CD8-positive, alpha-beta T cell (primary cell): ENCODE measurements at regions of chr1 and their contacts with region 1.

Region 1: DNA sequence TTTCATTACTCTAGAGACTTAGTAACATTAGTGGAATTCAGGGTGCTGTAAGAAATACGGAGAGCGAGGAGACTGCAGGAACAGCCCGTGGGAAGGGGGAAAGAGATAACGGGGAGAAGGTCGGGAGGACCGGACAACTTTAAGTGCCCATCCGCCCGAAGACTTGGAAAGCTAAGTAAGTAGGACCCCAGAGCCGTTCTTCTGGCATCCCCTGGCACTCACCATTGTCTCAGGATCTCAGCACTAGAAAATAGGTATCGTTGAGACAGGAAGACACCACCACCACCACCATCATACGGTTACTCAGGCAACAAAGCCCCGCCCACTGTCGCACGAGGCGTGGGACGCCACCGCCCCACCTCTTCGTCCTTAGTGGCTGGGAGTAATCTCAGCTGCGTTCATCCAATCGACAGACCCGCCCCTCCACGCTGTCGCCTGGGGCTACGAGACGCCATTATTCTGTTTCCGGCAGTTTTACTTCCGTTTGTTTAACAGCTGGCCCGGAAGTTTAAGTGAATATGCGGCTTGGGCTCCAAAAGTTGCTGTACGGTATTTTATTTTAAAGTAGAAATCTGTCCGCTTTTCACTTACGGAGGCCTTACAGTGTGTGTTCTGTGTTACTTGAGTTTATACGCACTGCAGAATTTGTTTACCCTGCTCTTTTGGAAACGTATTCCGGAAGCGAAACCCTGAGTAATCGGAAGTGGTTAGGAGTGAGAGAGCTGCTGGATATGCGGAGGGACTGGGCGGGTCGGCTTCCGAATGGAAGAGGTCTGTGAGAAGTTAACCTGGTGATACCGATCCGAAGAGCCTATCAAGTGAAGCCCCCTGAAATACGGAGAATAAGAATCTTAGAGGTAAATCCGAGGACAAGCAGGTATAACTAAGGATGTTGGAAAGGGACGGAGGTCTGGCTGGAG is at the starts of genes BLZF1 and NME7:
- DNase-seq: peak; percentile 96 to 99 (median 98)
- ATAC-seq: peak; percentile 93
- H3K4me3 ChIP-seq: peak within 1 kb of the TSS; percentile 84 to 94
- H3K4me3 Mint-ChIP-seq: peak within 1 kb of the TSS; percentile 51
- H3K27ac ChIP-seq: peak within 1 kb of the TSS; percentile 88 to 97
- H3K27ac Mint-ChIP-seq: peak within 1 kb of the TSS; percentile 32
- H3K4me1 ChIP-seq: peaks cover 23% of the 10 kb centered on the region
- H3K4me1 Mint-ChIP-seq: peaks cover 49% of the 10 kb centered on the region
- H3K27me3 ChIP-seq: no peaks in the 10 kb centered on the region
- H3K27me3 Mint-ChIP-seq: no peaks in the 10 kb centered on the region
- CTCF ChIP-seq: no peak
- total RNA-seq, gene BLZF1: 11.1 to 13.6 TPM
- total RNA-seq, gene NME7: 5.3 to 7.7 TPM

Region 2: GRCh38 chr1:168178638-168179437 is 1188.9 kb before region 1 on chr1 and contains the start of gene TIPRL:
- CTCF ChIA-PET with region 1: no interaction called
- POLR2A ChIA-PET with region 1: no interaction called
- intact Hi-C with region 1: loop called in 1 of 2 experiments (anchors 5 kb)
- DNase-seq: peak; percentile 84 to 97 (median 93)
- ATAC-seq: peak; percentile 86
- H3K4me3 ChIP-seq: peak within 1 kb of the TSS; percentile 98 to 100
- H3K4me3 Mint-ChIP-seq: no peak within 1 kb of the TSS
- H3K27ac ChIP-seq: peak within 1 kb of the TSS; percentile 95 to 97
- H3K27ac Mint-ChIP-seq: no peak within 1 kb of the TSS
- H3K4me1 ChIP-seq: peaks cover 15% of the 10 kb centered on the region
- H3K4me1 Mint-ChIP-seq: peaks cover 12% of the 10 kb centered on the region
- H3K27me3 ChIP-seq: no peaks in the 10 kb centered on the region
- H3K27me3 Mint-ChIP-seq: peaks cover 7% of the 10 kb centered on the region
- CTCF ChIP-seq: peak; percentile 49
- total RNA-seq, gene TIPRL: 15.0 to 18.3 TPM

Region 3: DNA sequence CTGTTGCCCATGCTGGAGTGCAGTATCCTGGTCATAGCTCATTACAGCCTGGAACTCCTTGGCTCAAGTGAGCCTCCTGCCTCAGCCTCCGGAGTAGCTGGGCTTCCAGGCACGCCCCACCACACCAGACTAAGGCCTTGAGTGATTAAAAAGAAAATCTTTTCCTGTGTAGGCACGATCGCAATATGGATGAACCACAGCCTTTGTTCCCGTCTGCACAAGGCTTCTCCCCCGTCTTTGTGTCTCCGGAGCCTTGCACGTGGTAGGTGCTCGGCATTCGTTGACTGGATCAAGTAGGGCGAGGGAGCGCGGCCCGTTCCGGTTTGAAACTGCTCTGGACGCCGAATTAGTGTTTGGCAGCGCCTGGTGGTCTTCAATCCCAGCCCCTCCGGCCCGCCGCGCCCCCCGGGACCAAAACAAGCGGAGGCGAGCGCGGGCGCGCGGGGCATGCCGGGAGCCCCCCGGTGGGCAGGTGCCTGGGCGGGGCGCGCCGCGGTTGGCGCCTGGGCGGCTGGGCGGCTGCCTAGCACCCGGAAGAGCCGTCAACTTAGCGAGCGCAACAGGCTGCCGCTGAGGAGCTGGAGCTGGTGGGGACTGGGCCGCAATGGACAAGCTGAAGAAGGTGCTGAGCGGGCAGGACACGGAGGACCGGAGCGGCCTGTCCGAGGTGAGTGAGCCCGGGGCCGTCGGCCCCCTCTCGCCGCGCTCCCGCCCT is 1142.1 kb before region 1 on chr1 and contains the start of gene SFT2D2:
- CTCF ChIA-PET with region 1: no interaction called
- POLR2A ChIA-PET with region 1: no interaction called
- intact Hi-C with region 1: loop called (anchors 1 to 5 kb)
- DNase-seq: peak; percentile 46 to 89 (median 77)
- ATAC-seq: peak; percentile 98
- H3K4me3 ChIP-seq: peak within 1 kb of the TSS; percentile 90 to 93
- H3K4me3 Mint-ChIP-seq: peak within 1 kb of the TSS; percentile 94
- H3K27ac ChIP-seq: peak within 1 kb of the TSS; percentile 71 to 75
- H3K27ac Mint-ChIP-seq: peak within 1 kb of the TSS; percentile 93
- H3K4me1 ChIP-seq: peaks cover 37% of the 10 kb centered on the region
- H3K4me1 Mint-ChIP-seq: peaks cover 49% of the 10 kb centered on the region
- H3K27me3 ChIP-seq: no peaks in the 10 kb centered on the region
- H3K27me3 Mint-ChIP-seq: peaks cover 3% of the 10 kb centered on the region
- CTCF ChIP-seq: no peak
- total RNA-seq, gene SFT2D2: 61.2 to 62.3 TPM

Region 4: GRCh38 chr1:169106095-169106920 is 261.4 kb before region 1 on chr1 and contains the start of gene ATP1B1:
- CTCF ChIA-PET with region 1: no interaction called
- POLR2A ChIA-PET with region 1: no interaction called
- intact Hi-C with region 1: loop called (anchors 1 to 5 kb)
- DNase-seq: peak; percentile 59 to 88 (median 78)
- ATAC-seq: peak; percentile 89
- H3K4me3 ChIP-seq: peak within 1 kb of the TSS; percentile 65 to 74
- H3K4me3 Mint-ChIP-seq: peak within 1 kb of the TSS; percentile 91
- H3K27ac ChIP-seq: no peak within 1 kb of the TSS
- H3K27ac Mint-ChIP-seq: peak within 1 kb of the TSS; percentile 23
- H3K4me1 ChIP-seq: peaks cover 24% of the 10 kb centered on the region
- H3K4me1 Mint-ChIP-seq: peaks cover 33% of the 10 kb centered on the region
- H3K27me3 ChIP-seq: peaks cover 0 to 2% of the 10 kb centered on the region in 2 experiments
- H3K27me3 Mint-ChIP-seq: peaks cover 4% of the 10 kb centered on the region
- CTCF ChIP-seq: peak; percentile 29
- total RNA-seq, gene ATP1B1: 2.6 to 3.0 TPM

Region 5: DNA sequence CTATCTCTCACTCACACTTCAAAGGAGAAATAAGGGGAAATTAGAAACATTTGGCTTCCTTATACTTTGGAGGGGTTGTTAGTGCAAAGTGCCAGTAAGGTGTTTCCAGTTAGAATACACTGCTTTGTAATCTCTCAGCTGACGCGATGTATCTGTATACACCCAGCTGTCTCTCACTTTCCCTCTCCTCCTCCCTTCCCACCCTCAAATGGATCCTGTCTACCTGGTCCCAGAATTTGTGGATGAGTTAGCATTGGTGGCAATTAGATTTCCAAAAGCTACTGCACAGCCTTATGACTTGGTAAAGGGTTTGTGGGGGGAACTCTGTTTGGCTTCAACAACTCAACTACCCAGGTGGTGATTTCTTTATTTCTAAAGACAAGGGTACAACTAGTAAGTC is 250.7 kb before region 1 on chr1:
- CTCF ChIA-PET with region 1: no interaction called
- POLR2A ChIA-PET with region 1: no interaction called
- intact Hi-C with region 1: no loop called
- DNase-seq: no peak
- ATAC-seq: no peak
- H3K4me3 ChIP-seq: no peak overlapping the region
- H3K4me3 Mint-ChIP-seq: no peak overlapping the region
- H3K27ac ChIP-seq: no peak overlapping the region
- H3K27ac Mint-ChIP-seq: no peak overlapping the region
- H3K4me1 ChIP-seq: no peaks in the 10 kb centered on the region
- H3K4me1 Mint-ChIP-seq: no peaks in the 10 kb centered on the region
- H3K27me3 ChIP-seq: no peaks in the 10 kb centered on the region
- H3K27me3 Mint-ChIP-seq: peaks cover under 1% of the 10 kb centered on the region
- CTCF ChIP-seq: no peak

Region 6: GRCh38 chr1:169309178-169310166 is 58.3 kb before region 1 on chr1:
- CTCF ChIA-PET with region 1: no interaction called
- POLR2A ChIA-PET with region 1: no interaction called
- intact Hi-C with region 1: no loop called
- DNase-seq: peak in 2 of 9 experiments; percentile 12 to 31
- ATAC-seq: peak; percentile 30
- H3K4me3 ChIP-seq: peak overlapping the region; percentile 4 to 22
- H3K4me3 Mint-ChIP-seq: peak overlapping the region; percentile 76
- H3K27ac ChIP-seq: no peak overlapping the region
- H3K27ac Mint-ChIP-seq: no peak overlapping the region
- H3K4me1 ChIP-seq: no peaks in the 10 kb centered on the region
- H3K4me1 Mint-ChIP-seq: peaks cover 13% of the 10 kb centered on the region
- H3K27me3 ChIP-seq: no peaks in the 10 kb centered on the region
- H3K27me3 Mint-ChIP-seq: no peaks in the 10 kb centered on the region
- CTCF ChIP-seq: no peak

Region 7: DNA sequence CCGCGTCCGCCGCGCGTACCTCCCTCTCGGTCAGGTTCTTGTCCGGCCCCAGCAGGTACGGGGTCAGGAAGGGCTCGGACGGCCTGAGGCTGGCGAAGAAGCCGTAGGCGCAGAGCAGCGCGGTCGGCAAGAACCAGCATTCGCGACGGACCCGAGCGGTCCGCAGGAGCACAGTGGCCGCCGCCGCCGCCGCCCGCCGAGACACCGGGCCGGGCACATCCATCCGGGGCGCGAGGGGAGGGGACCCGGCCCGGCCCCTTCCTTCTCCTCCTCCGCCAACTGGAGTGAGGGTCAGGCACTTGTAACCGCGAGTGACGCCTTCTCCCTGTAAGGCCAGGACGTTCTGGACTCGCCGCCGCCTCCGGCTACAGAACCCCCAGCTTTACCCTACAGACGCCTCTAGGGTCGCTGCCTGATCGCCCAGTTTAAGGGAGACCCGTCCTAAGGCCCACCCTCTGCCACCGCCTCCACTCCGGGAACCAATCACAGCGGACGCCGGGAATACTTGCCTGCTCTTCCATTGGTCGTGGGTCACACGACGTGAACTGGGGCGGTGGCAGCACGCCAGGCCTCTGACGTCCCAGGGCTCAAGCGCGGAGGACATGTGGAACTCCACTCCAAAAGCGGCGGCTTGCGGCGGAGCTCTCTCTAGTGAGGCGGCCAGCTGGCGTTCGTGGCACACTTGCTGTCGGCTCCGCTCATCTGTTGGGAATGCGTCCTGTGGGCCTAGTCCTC is 118.0 kb after region 1 on chr1 and contains the start of gene SLC19A2:
- CTCF ChIA-PET with region 1: no interaction called
- POLR2A ChIA-PET with region 1: interaction called, 3 read pairs
- intact Hi-C with region 1: loop called (anchors 1 kb)
- DNase-seq: peak; percentile 84 to 97 (median 93)
- ATAC-seq: peak; percentile 98
- H3K4me3 ChIP-seq: peak within 1 kb of the TSS; percentile 69 to 79
- H3K4me3 Mint-ChIP-seq: peak within 1 kb of the TSS; percentile 97
- H3K27ac ChIP-seq: peak within 1 kb of the TSS; percentile 73 to 79
- H3K27ac Mint-ChIP-seq: peak within 1 kb of the TSS; percentile 95
- H3K4me1 ChIP-seq: peaks cover 20% of the 10 kb centered on the region
- H3K4me1 Mint-ChIP-seq: peaks cover 43% of the 10 kb centered on the region
- H3K27me3 ChIP-seq: no peaks in the 10 kb centered on the region
- H3K27me3 Mint-ChIP-seq: no peaks in the 10 kb centered on the region
- CTCF ChIP-seq: no peak
- total RNA-seq, gene SLC19A2: 4.7 to 6.1 TPM

Region 8: GRCh38 chr1:170074250-170075157 is 706.8 kb after region 1 on chr1 and contains the start of gene KIFAP3:
- CTCF ChIA-PET with region 1: no interaction called
- POLR2A ChIA-PET with region 1: no interaction called
- intact Hi-C with region 1: loop called in 1 of 2 experiments (anchors 10 kb)
- DNase-seq: peak; percentile 89 to 99 (median 95)
- ATAC-seq: peak; percentile 96
- H3K4me3 ChIP-seq: peak within 1 kb of the TSS; percentile 74 to 92
- H3K4me3 Mint-ChIP-seq: peak within 1 kb of the TSS; percentile 89
- H3K27ac ChIP-seq: peak within 1 kb of the TSS; percentile 80 to 88
- H3K27ac Mint-ChIP-seq: peak within 1 kb of the TSS; percentile 94
- H3K4me1 ChIP-seq: peaks cover 28% of the 10 kb centered on the region
- H3K4me1 Mint-ChIP-seq: peaks cover 53% of the 10 kb centered on the region
- H3K27me3 ChIP-seq: no peaks in the 10 kb centered on the region
- H3K27me3 Mint-ChIP-seq: no peaks in the 10 kb centered on the region
- CTCF ChIP-seq: peak; percentile 46
- total RNA-seq, gene KIFAP3: 15.3 to 16.5 TPM

Region 9: DNA sequence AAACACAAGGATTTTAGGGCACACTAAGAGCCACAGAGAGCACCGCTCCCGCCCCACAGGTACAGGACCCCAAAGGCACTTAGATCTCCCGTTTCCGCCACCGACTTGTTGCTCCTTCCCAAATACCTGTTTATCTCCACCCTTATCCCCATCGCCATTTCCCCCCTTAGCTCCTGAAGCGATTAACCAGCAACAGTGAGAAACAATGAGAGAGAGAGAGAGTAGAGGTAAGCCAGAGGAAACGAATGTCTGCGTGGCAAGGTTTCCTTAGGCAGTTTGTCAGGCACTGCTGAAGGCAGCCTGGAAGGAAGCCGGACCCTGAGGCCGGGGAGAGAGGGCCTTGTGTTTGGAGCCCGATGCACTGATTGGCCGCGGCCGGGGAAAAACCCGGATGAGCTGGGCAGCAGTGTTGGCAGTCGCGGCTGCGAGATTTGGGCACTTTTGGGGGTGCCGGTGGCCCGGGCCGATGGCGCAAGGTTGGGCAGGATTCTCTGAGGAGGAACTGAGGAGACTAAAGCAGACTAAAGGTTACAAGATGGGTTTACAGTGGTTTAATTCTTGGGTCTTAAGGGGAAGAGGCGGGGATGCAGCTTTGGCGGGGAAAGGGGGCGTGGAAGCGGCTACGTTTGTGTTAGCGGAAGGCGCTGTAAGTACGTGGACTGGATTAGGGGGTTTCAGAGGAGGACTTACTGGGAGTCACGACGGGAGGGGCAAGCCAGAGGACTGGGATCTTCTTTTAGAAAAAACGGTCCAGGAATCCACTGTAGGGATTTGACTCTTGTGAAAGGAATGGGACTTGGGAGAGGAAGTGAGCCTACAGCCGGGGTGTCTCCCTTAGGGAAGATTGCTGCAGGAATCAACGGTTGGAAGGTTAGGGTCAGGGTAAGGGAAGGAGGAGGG is 1164.3 kb after region 1 on chr1 and contains the start of gene GORAB:
- CTCF ChIA-PET with region 1: no interaction called
- POLR2A ChIA-PET with region 1: no interaction called
- intact Hi-C with region 1: loop called in 1 of 2 experiments (anchors 5 kb)
- DNase-seq: peak; percentile 72 to 93 (median 85)
- ATAC-seq: peak; percentile 90
- H3K4me3 ChIP-seq: peak within 1 kb of the TSS; percentile 73 to 86
- H3K4me3 Mint-ChIP-seq: no peak within 1 kb of the TSS
- H3K27ac ChIP-seq: peak within 1 kb of the TSS; percentile 80 to 91
- H3K27ac Mint-ChIP-seq: no peak within 1 kb of the TSS
- H3K4me1 ChIP-seq: peaks cover 14% of the 10 kb centered on the region
- H3K4me1 Mint-ChIP-seq: peaks cover 22% of the 10 kb centered on the region
- H3K27me3 ChIP-seq: no peaks in the 10 kb centered on the region
- H3K27me3 Mint-ChIP-seq: no peaks in the 10 kb centered on the region
- CTCF ChIP-seq: no peak
- total RNA-seq, gene GORAB: 24.8 to 26.1 TPM